ENCODE measurements at regions of chr17 and their contacts with region 1.

Region 1: GRCh38 chr17:416293-417206 is 63.9 kb upstream of the RPH3AL start:
- DNase-seq: no peak
- ATAC-seq: no peak
- H3K4me3 ChIP-seq: no peak overlapping the region
- H3K27ac ChIP-seq: no peak overlapping the region
- H3K4me1 ChIP-seq: peaks cover 0 to 6% (median 0%) of the 10 kb centered on the region in 4 donors
- H3K27me3 ChIP-seq: no peaks in the 10 kb centered on the region
- CTCF ChIP-seq: no peak
- POLR2A ChIP-seq: no peak

Region 2: GRCh38 chr17:179721-180391 is 236.7 kb before region 1 on chr17:
- intact Hi-C with region 1: no loop called
- DNase-seq: no peak
- ATAC-seq: no peak
- H3K4me3 ChIP-seq: peak overlapping the region in 2 of 3 donors; percentile 27 to 38
- H3K27ac ChIP-seq: no peak overlapping the region
- H3K4me1 ChIP-seq: peaks cover 0 to 21% (median 3%) of the 10 kb centered on the region in 4 donors
- H3K27me3 ChIP-seq: no peaks in the 10 kb centered on the region
- CTCF ChIP-seq: no peak
- POLR2A ChIP-seq: no peak

Region 3: DNA sequence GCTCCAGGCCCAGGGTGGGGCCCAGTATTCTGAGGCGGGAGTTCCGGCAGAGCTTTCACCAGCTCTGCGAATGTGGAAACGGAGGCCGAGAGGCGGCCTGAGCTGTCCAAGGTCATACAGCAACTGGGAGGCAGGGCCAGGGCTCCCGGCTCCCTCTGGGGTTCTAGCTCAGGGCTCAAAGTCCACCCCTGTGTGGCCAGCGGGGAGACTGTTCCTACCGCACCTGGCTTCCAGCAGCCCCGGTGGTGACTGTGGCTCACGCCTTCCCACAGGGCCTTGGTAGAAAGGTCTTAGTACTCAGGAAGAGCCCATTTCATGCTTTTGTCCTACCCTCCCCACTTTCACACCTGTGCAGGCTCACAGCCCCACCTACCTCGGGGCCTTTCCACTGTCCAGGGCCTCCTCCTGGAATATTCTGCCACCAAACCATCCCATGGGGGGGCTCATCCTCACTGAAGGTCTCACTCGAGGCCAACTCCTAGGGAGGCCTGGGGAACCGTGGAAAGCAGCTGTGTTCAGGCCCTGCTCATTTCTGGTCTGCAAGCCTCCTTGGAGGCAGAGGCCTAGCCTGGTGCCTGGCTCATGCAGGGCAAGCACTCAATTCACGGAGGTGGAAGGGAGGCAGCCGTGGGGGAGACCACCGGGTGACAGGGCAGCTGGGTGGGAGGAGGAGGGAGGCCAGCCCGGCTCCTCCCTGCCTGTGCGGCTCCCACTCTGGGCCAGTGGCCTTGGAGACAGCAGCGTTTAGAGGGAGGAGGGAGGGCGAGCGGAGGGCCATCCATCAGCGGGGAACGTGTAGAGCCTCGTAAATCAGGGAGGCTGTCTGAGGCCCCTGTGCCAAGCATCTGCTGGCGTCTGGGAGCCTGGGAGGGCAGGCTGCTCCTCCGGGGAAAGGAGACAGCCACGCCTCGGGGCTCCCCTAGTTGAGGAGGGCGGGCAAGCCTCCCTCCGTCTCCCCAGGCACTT is 222.4 kb before region 1 on chr17:
- intact Hi-C with region 1: no loop called
- DNase-seq: no peak
- ATAC-seq: peak; percentile 39 to 68 (median 60)
- H3K4me3 ChIP-seq: no peak overlapping the region
- H3K27ac ChIP-seq: no peak overlapping the region
- H3K4me1 ChIP-seq: peaks cover 0 to 3% (median 0%) of the 10 kb centered on the region in 4 donors
- H3K27me3 ChIP-seq: no peaks in the 10 kb centered on the region
- CTCF ChIP-seq: no peak
- POLR2A ChIP-seq: no peak

Region 4: DNA sequence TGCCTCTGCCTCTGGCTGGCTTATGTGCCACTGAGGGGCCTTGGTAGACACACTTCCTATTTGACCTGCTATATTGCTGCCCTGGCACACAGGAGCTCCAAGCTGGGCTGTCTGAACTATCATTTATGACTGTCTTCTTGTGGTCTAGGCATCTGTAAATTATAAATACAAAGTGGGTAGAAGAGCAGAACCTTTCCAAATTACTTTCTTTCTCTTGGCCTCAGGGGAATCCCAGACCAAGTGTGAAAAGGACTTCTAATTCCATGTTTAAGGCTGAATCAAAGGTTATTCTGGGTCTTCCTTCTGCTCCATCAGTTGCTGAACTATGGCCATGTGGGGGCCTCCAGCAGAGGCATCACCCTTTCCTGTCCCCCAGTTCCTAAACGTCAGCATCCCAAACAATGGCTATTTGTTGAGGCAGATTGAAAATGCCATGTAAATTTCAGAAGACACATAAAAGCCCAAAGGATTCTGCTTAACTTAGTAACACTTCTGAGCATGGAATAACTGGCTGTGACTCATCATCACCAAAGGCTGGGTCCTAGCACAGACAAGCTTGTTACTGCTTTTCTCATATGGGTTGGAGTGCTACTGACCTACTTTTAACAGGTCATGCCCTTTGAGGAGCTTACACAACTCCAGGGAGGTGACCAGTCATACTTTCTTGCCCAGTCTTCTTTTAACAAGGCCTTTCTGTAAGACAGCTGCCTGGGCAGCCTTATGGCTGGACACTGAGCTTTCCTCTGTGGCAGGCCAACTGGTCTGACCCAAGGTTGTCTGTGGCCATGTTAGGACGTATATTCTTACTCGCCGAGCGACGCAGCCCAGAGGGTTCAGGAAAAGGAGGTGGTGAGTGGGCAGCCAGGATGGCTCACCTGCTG is 143.2 kb after region 1 on chr17:
- intact Hi-C with region 1: no loop called
- DNase-seq: no peak
- ATAC-seq: peak; percentile 31 to 76 (median 60)
- H3K4me3 ChIP-seq: no peak overlapping the region
- H3K27ac ChIP-seq: peak overlapping the region in 2 of 3 donors; percentile 19 to 71
- H3K4me1 ChIP-seq: peaks cover 0 to 9% (median 0%) of the 10 kb centered on the region in 4 donors
- H3K27me3 ChIP-seq: no peaks in the 10 kb centered on the region
- CTCF ChIP-seq: no peak
- POLR2A ChIP-seq: no peak

Region 5: GRCh38 chr17:705863-706262 is 289.3 kb after region 1 on chr17:
- intact Hi-C with region 1: loop called in 1 of 2 experiments (anchors 5 kb)
- DNase-seq: no peak
- ATAC-seq: peak; percentile 27 to 53 (median 33)
- H3K4me3 ChIP-seq: no peak overlapping the region
- H3K27ac ChIP-seq: no peak overlapping the region
- H3K4me1 ChIP-seq: no peaks in the 10 kb centered on the region
- H3K27me3 ChIP-seq: no peaks in the 10 kb centered on the region
- CTCF ChIP-seq: no peak
- POLR2A ChIP-seq: no peak

Measured in right lobe of liver (tissue), 6 donors.